ENCODE measurements at regions of chr1 and their contacts with region 1.

Region 1: GRCh38 chr1:119675349-119676345 is 27.6 kb upstream of the ZNF697 start:
- DNase-seq: peak; percentile 92
- H3K4me3 ChIP-seq: peak overlapping the region; percentile 32 to 86 (median 66)
- H3K27ac ChIP-seq: peak overlapping the region; percentile 78
- H3K4me1 ChIP-seq: peaks cover 42% of the 10 kb centered on the region
- H3K27me3 ChIP-seq: peaks cover 4 to 6% of the 10 kb centered on the region in 2 experiments
- CTCF ChIP-seq: peak; percentile 64 to 77
- POLR2A ChIP-seq: no peak

Region 2: DNA sequence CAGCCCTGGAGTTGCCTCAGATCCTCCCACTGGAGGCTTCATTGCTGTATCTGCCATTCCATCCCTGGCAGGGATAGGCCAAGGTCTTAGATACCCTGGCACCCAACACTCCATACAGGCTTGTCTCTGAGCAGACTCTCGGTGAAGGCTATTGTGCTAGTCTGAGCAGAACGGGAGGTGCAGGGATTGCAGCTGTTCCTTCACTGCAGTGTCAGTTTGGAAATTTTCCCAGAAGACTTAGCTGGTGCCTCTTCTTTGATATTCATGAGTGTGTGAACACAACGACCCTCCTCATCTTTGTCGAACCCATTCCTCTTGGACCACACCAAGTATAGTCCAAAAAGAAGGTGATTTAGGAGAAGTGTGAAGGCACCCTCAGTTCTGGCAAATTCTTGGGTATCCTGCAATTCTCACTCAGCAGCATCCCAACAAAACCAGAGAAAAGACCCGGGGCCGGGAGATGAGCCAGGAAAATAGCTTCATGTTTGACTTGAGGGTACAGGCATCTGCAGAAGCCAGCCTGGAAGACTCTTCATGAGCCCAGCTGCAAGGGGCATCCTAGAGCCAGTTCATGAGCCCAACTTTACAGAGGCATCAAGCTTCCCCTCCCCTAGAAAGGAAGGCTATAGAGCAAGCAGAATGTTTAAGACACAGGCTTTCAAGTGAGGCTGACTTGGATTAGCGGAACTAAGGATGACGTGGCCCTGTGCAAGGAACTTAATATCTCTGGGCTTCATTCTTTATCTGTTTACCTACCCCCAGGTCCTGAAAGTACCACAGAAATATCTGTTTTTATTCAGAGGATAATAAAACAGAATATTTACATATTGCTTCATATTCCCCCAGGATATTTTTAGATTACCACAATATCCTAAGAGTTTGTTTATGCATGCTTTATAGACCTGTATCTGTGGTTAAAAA is 345.8 kb before region 1 on chr1:
- CTCF ChIA-PET with region 1: no interaction called
- POLR2A ChIA-PET with region 1: no interaction called
- dilution Hi-C with region 1: no loop called
- intact Hi-C with region 1: no loop called
- DNase-seq: no peak
- H3K4me3 ChIP-seq: no peak overlapping the region
- H3K27ac ChIP-seq: no peak overlapping the region
- H3K4me1 ChIP-seq: peaks cover 2% of the 10 kb centered on the region
- H3K27me3 ChIP-seq: peaks cover 2 to 3% of the 10 kb centered on the region in 2 experiments
- CTCF ChIP-seq: no peak
- POLR2A ChIP-seq: no peak

Region 3: GRCh38 chr1:119549719-119550132 is 125.9 kb before region 1 on chr1:
- CTCF ChIA-PET with region 1: interaction called, 4 read pairs
- POLR2A ChIA-PET with region 1: no interaction called
- dilution Hi-C with region 1: no loop called
- intact Hi-C with region 1: loop called (anchors 1 kb)
- DNase-seq: peak; percentile 63
- H3K4me3 ChIP-seq: no peak overlapping the region
- H3K27ac ChIP-seq: no peak overlapping the region
- H3K4me1 ChIP-seq: no peaks in the 10 kb centered on the region
- H3K27me3 ChIP-seq: peaks cover 2 to 4% of the 10 kb centered on the region in 2 experiments
- CTCF ChIP-seq: peak; percentile 64 to 74
- POLR2A ChIP-seq: no peak

Region 4: DNA sequence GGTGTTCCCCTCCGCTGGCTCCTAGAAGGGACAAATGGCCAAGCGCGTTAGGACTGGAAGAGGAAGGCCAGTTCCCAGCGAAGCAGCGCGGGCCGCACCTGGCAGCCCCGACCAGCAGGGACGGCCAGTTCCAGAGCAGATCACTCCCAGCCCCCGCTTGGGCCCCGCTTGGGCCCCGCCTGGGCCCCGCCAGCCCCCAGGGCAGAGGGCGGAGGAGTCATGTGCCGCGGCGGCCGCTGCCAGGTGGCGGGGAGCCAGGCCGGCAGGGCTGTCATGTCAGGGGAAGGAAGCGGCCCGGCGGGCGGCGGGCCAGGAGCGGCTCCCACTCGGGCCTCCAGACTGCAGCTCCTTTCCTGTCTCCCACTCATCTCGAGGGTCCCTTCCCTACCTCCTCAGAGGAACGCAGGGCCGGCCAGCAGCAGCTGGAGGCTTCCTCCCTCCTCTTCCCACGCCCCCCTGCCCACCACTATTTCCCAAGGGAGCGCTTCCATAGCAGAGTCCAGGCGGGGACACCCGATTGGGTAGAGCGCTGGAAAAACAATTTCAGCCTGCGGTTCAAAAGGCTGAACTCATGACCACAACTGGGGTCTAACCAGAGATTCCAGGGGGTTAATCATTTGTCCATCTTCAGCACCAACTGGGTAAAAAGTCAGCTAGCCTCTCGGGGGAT is 44.1 kb before region 1 on chr1:
- CTCF ChIA-PET with region 1: interaction called, 17 read pairs
- POLR2A ChIA-PET with region 1: no interaction called
- dilution Hi-C with region 1: no loop called
- intact Hi-C with region 1: loop called (anchors 1 kb)
- DNase-seq: peak; percentile 92
- H3K4me3 ChIP-seq: peak overlapping the region in 1 of 3 experiments; percentile 20
- H3K27ac ChIP-seq: peak overlapping the region; percentile 91
- H3K4me1 ChIP-seq: peaks cover 63% of the 10 kb centered on the region
- H3K27me3 ChIP-seq: no peaks in the 10 kb centered on the region
- CTCF ChIP-seq: no peak
- POLR2A ChIP-seq: peak; percentile 64

Region 5: DNA sequence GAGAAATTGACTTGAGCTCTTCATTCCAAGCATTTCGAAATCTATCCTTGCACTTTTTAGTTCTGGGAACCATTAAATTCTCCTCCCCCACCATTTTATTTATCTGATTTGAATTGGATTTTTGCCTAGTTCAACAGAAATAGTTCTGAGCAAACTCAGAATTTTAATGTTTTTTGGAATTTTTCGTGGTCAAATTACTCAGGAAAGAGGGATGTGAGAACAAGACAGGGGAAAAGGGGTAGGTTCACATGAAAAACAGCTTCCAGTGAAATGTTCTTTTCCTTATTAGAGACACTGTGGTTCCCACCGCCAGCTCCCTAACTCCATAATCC is 21.8 kb before region 1 on chr1:
- CTCF ChIA-PET with region 1: interaction called, 110 read pairs
- POLR2A ChIA-PET with region 1: interaction called, 9 read pairs
- dilution Hi-C with region 1: no loop called
- intact Hi-C with region 1: no loop called
- DNase-seq: no peak
- H3K4me3 ChIP-seq: no peak overlapping the region
- H3K27ac ChIP-seq: no peak overlapping the region
- H3K4me1 ChIP-seq: peaks cover 10% of the 10 kb centered on the region
- H3K27me3 ChIP-seq: peaks cover 0 to 3% of the 10 kb centered on the region in 2 experiments
- CTCF ChIP-seq: no peak
- POLR2A ChIP-seq: no peak

Region 6: GRCh38 chr1:119711804-119712341 is 36.2 kb after region 1 on chr1 and contains the start of gene PHGDH:
- CTCF ChIA-PET with region 1: interaction called, 40 read pairs
- POLR2A ChIA-PET with region 1: no interaction called
- dilution Hi-C with region 1: no loop called
- intact Hi-C with region 1: loop called (anchors 1 kb)
- DNase-seq: peak; percentile 75
- H3K4me3 ChIP-seq: peak within 1 kb of the TSS; percentile 69 to 81 (median 69)
- H3K27ac ChIP-seq: peak within 1 kb of the TSS; percentile 51
- H3K4me1 ChIP-seq: peaks cover 9% of the 10 kb centered on the region
- H3K27me3 ChIP-seq: peaks cover 7 to 15% of the 10 kb centered on the region in 2 experiments
- CTCF ChIP-seq: no peak
- POLR2A ChIP-seq: peak; percentile 28
- total RNA-seq, gene PHGDH: 101 and 120 TPM in 2 replicates

Region 7: DNA sequence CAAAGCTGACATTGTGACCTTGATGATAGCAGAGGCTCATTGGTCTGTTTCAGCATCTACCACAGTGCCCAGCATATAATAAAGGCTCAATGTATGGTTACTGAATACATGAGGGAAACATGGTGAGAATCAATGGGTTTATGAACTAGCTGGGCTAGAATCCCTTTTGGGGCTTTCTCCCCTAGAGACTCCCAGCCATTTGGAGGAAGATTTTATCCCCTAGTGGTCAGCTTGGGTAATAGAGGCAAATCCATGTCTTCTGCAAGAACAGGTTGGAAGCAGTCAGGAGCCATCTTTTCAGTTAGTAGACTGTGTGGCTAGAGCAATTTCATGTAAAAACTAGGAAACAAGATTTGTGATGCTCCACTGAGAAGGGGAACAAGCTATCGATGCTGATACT is 151.4 kb after region 1 on chr1:
- CTCF ChIA-PET with region 1: no interaction called
- POLR2A ChIA-PET with region 1: no interaction called
- dilution Hi-C with region 1: no loop called
- intact Hi-C with region 1: no loop called
- DNase-seq: no peak
- H3K4me3 ChIP-seq: no peak overlapping the region
- H3K27ac ChIP-seq: no peak overlapping the region
- H3K4me1 ChIP-seq: no peaks in the 10 kb centered on the region
- H3K27me3 ChIP-seq: peaks cover 2 to 20% of the 10 kb centered on the region in 2 experiments
- CTCF ChIP-seq: peak; percentile 30 to 35
- POLR2A ChIP-seq: no peak